H1 (cell line): ENCODE measurements at regions of chr6 and their contacts with region 1.

Region 1: DNA sequence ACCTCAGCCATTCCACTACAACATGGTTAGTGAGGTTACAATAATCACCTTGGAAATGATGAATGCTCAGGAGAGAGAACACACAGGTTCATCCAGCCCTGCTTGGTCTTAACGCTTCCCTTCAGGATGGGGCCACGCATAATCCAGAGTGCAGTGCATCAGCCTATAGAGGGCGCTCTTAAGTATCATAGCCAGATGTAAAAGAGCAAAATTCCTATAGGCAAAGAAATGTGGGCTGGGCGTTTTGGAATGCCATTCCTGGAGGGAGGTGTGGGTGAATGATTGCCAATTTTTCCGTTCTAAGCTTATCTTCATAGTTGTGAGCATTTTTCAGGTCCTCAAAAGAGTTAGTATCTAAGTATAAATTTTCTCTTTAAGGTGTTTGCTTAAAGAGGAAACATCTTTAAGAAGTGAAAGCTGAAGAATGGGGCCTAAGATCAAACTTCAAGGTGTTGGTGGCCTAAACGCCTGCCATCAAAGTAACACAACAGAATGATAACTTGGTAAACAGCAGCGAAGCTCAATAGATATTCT is 1.8 kb downstream of the RIPOR2 start:
- DNase-seq: peak in 1 of 2 experiments; percentile 70
- H3K4me3 ChIP-seq: peak overlapping the region in 1 of 4 experiments; percentile 53; a peak in 2 of 8 replicates
- H3K27ac ChIP-seq: no peak overlapping the region
- H3K4me1 ChIP-seq: peaks cover 4 to 25% (median 19%) of the 10 kb centered on the region in 4 experiments; a peak in 6 of 7 replicates
- H3K27me3 ChIP-seq: no peaks in the 10 kb centered on the region; a peak in 1 of 7 replicates
- CTCF ChIP-seq: peak; percentile 57 to 91 (median 68)
- EP300 ChIP-seq: no peak
- POLR2A ChIP-seq: no peak
- RAD21 ChIP-seq: peak; percentile 49 to 69

Region 2: DNA sequence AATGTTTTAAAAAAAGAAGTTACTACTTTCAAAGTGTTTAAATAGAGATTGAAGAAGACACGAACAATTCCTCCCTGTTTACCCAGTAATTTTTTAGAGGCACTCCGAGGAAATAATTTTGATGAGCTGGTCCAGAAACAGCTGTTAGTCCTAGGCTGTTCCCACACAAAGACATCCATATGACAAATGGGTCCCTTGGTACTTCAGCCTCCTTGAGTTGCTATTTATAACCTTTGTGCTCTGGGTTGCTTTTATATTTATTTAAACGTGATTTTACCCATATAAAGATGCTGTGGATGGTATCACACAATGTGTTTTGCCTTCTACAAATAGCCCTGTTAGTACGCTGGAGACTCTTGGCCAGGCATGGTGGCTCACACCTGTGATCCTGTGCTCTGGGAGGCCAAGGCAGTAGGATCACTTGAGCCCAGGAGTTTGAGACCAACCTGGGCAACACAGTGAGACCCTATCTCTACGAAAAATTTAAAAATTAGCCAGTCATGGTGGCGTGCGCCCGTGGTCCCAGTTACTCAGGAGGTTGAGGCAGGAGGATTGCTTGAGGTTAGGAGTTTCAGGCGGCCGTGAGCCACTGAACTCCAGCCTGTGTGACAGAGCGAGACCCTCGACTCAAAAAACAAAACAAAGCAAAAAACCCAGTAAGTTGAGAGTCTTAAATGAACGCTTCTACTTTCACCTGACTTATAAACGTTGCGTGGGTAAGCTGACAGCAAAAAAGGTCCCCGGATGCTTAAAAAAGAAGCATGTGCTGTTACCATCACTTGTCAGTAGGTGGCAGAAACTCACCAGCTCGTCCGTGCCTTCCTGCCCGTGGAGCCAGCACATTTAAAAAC is 78.3 kb before region 1 on chr6:
- CTCF ChIA-PET with region 1: interaction called, 37 read pairs
- POLR2A ChIA-PET with region 1: no interaction called
- DNase-seq: peak; percentile 41 to 59
- H3K4me3 ChIP-seq: no peak overlapping the region
- H3K27ac ChIP-seq: no peak overlapping the region
- H3K4me1 ChIP-seq: no peaks in the 10 kb centered on the region
- H3K27me3 ChIP-seq: no peaks in the 10 kb centered on the region
- CTCF ChIP-seq: peak; percentile 81 to 85 (median 83)
- EP300 ChIP-seq: no peak
- POLR2A ChIP-seq: no peak
- RAD21 ChIP-seq: peak; percentile 96 to 97

Region 3: GRCh38 chr6:24883618-24884017 is 50.3 kb before region 1 on chr6:
- CTCF ChIA-PET with region 1: interaction called, 11 read pairs
- POLR2A ChIA-PET with region 1: interaction called, 3 read pairs
- DNase-seq: no peak
- H3K4me3 ChIP-seq: no peak overlapping the region
- H3K27ac ChIP-seq: no peak overlapping the region
- H3K4me1 ChIP-seq: peaks cover 0 to 8% (median 3%) of the 10 kb centered on the region in 4 experiments; a peak in 3 of 7 replicates
- H3K27me3 ChIP-seq: no peaks in the 10 kb centered on the region
- CTCF ChIP-seq: no peak
- EP300 ChIP-seq: no peak
- POLR2A ChIP-seq: no peak
- RAD21 ChIP-seq: no peak

Region 4: DNA sequence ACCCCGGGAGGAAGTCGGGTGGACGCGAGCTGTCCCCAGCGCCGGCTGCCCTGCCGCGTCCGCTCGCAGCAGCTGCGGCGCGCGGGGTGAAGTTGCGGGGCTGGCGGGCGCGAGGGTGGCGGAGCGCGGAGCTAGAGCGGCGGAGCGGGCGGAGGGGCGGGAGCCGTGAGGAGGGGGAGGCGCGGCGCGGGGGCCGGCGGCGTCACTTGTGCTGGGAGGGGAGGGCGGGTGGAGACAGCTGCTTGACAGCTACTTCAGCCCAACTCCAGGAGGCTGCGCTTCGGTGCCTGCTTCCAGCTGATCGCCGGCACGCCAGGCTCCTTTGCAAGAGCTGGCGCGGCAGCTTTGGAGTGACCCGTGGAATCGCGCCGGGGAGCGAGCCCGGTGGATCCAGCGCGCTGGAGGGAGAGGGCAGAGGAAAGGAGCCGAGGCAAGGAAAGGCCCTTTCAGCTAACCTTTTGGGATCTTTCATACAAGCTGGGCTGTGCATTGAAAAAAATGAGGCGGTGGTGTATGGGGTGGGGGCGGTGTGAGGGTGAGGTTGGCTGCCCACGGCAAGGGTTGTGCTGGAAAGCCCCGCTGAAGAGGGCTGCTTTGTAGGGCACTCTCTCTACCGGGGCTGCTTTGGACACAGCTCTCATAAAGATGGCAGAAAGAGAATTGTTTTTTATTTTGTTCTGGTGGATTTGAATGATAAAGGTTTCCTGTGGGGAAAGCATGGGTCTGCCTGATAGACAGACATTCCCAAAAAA is 22.8 kb before region 1 on chr6:
- CTCF ChIA-PET with region 1: interaction called, 138 read pairs
- POLR2A ChIA-PET with region 1: interaction called, 3 read pairs
- DNase-seq: no peak
- H3K4me3 ChIP-seq: peak overlapping the region; percentile 57 to 79 (median 68)
- H3K27ac ChIP-seq: no peak overlapping the region
- H3K4me1 ChIP-seq: peaks cover 3 to 15% (median 12%) of the 10 kb centered on the region in 4 experiments; a peak in 6 of 7 replicates
- H3K27me3 ChIP-seq: peaks cover 0 to 29% (median 20%) of the 10 kb centered on the region in 4 experiments; a peak in 5 of 7 replicates
- CTCF ChIP-seq: no peak
- EP300 ChIP-seq: no peak
- POLR2A ChIP-seq: no peak
- RAD21 ChIP-seq: no peak

Region 5: GRCh38 chr6:24960991-24961475 is 27.1 kb after region 1 on chr6:
- CTCF ChIA-PET with region 1: interaction called, 19 read pairs
- POLR2A ChIA-PET with region 1: interaction called, 4 read pairs
- DNase-seq: no peak
- H3K4me3 ChIP-seq: no peak overlapping the region
- H3K27ac ChIP-seq: no peak overlapping the region
- H3K4me1 ChIP-seq: no peaks in the 10 kb centered on the region
- H3K27me3 ChIP-seq: no peaks in the 10 kb centered on the region
- CTCF ChIP-seq: no peak
- EP300 ChIP-seq: no peak
- POLR2A ChIP-seq: no peak
- RAD21 ChIP-seq: no peak

Region 6: GRCh38 chr6:25006565-25007001 is 72.6 kb after region 1 on chr6:
- CTCF ChIA-PET with region 1: interaction called, 23 read pairs
- POLR2A ChIA-PET with region 1: no interaction called
- DNase-seq: no peak
- H3K4me3 ChIP-seq: no peak overlapping the region
- H3K27ac ChIP-seq: no peak overlapping the region
- H3K4me1 ChIP-seq: peaks cover 0 to 4% (median 2%) of the 10 kb centered on the region in 4 experiments; a peak in 2 of 7 replicates
- H3K27me3 ChIP-seq: no peaks in the 10 kb centered on the region
- CTCF ChIP-seq: no peak
- EP300 ChIP-seq: no peak
- POLR2A ChIP-seq: no peak
- RAD21 ChIP-seq: no peak